Gastrocnemius medialis (tissue), 4 donors: ENCODE measurements at regions of chr9 and their contacts with region 1.

Region 1: DNA sequence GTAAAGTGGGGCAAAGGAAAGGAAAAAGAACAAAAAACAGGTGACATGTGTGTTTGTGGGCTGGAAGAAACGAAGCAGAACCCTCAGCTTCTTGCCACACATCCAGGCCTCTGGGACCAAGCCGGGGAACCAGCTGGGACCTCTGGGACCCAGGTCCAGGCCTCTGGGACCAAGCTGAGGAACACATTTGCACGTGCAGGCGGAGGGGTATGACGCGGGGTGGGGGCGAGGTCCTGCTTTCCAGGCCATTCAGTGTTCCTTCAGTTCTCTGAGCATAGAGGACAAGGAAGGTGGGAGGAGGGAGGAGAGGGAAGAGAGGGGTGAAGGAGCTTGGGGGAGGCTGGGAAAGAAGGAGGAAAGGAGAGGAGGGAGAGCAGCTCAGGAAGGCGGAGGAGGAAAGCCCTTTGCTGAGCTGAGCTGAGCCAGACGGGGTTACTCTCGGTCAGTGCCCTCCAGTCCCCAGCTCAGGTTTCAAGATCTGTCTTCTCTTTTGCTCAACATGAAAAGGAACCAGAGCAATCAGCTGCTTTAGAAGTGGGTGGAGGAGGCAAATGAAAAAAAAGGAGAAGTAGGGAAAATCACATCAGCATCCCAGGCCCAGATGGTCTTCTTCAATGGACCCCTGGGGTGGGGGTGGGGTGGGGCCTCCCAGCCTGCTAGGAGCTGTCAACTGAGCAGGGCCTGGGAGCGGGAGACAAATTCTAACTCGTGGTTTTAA is 59.1 kb downstream of the ABCA1 start:
- DNase-seq: peak; percentile 78 to 90
- ATAC-seq: peak; percentile 88 to 89
- H3K4me3 ChIP-seq: peak overlapping the region in 1 of 4 donors; percentile 14
- H3K27ac ChIP-seq: peak overlapping the region; percentile 84 to 92 (median 90)
- H3K4me1 ChIP-seq: peaks cover 67 to 69% of the 10 kb centered on the region in 2 donors
- H3K27me3 ChIP-seq: no peaks in the 10 kb centered on the region
- CTCF ChIP-seq: no peak
- POLR2A ChIP-seq: no peak

Region 2: GRCh38 chr9:104826907-104827306 is 41.9 kb before region 1 on chr9:
- in situ Hi-C with region 1: no loop called
- intact Hi-C with region 1: loop called (anchors 5 kb)
- DNase-seq: peak in 1 of 2 donors; percentile 42
- ATAC-seq: peak in 1 of 2 donors; percentile 41
- H3K4me3 ChIP-seq: no peak overlapping the region
- H3K27ac ChIP-seq: peak overlapping the region; percentile 61 to 81 (median 74)
- H3K4me1 ChIP-seq: peaks cover 12 to 27% of the 10 kb centered on the region in 2 donors
- H3K27me3 ChIP-seq: no peaks in the 10 kb centered on the region
- CTCF ChIP-seq: no peak
- POLR2A ChIP-seq: no peak

Region 3: DNA sequence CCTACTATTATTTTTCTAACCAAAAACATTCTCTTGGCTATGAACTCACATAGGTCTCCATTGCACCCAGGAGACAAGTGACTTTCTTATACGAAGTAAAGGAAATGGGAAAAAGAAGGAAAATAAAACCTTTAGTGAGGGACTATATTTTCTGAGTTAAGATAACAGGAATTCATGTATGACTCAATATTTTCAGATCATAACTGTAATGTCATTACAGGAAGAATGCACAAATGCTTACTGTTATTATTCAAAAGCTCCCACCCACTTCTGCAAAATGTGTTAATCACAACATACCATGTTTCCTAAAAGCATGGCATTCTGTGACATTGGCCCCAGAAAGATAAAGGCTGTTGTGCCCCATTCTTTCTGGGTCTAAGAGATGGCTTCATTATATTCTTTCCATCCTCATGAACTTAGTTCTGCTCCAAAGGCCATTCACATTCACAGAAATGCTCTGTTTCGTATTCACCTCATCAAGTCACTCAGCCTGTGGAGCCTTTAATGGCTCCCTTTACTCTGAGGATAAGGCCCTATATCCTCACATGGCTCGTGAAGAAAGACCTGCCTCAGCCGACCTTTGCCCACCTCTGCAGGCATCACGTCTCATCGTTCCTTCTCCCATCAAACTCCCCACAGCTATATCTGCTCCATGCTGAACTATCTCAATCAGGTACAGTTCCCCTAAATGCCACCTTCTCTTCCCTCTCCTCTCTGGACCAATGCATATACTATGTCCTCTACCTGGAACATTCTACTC is 17.9 kb before region 1 on chr9:
- in situ Hi-C with region 1: no loop called
- intact Hi-C with region 1: no loop called
- DNase-seq: no peak
- ATAC-seq: no peak
- H3K4me3 ChIP-seq: no peak overlapping the region
- H3K27ac ChIP-seq: peak overlapping the region in 3 of 4 donors; percentile 1 to 35 (median 32)
- H3K4me1 ChIP-seq: peaks cover 22 to 29% of the 10 kb centered on the region in 2 donors
- H3K27me3 ChIP-seq: no peaks in the 10 kb centered on the region
- CTCF ChIP-seq: no peak
- POLR2A ChIP-seq: no peak

Region 4: GRCh38 chr9:104927912-104928740 is 59.3 kb after region 1 on chr9 and contains the start of gene ABCA1:
- in situ Hi-C with region 1: no loop called
- intact Hi-C with region 1: loop called (anchors 2 kb)
- DNase-seq: peak; percentile 94 to 96
- ATAC-seq: peak; percentile 85
- H3K4me3 ChIP-seq: peak within 1 kb of the TSS; percentile 68 to 94 (median 88)
- H3K27ac ChIP-seq: peak within 1 kb of the TSS; percentile 89 to 98 (median 96)
- H3K4me1 ChIP-seq: peaks cover 30 to 31% of the 10 kb centered on the region in 2 donors
- H3K27me3 ChIP-seq: no peaks in the 10 kb centered on the region
- CTCF ChIP-seq: no peak
- POLR2A ChIP-seq: peak; percentile 51 to 96
- total RNA-seq, gene ABCA1: 4.9 to 23.8 (median 21.5) TPM

Region 5: DNA sequence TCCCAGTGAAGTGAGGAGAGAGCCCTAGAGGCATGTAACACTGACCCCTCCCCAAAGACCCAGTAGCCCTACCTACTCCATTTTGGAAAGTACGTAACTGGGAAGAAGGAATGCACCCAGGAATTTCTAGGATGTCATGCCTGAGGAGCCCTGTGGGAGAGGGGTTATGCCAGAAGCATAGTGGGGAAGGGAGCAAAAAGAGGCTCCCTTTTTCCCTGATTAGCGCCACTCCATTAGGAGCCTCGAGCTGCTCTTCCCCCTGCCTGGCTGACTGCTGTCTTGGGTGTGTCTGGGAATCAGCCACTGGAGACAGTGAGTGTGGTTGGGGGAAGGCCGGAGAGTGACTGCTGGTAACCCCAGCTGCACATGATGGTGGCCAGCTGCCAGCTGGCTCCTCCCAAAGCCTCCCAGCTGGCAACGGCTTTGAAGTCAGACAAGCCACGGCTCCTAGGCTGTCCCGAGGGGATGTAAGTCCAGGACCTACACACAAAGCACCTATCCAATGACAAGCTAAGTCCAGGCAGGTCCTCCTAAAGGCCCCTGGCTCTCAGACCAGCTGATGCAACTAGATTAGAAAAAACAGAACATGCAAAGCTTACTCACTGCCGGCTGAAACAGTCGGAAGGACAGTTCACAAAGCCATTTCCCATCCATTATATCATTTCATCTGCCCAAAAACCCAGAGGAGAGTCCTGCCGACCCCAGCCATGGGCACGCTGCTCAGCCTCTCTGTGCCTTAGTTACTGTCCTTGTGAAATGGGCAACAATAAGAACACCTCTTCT is 195.7 kb after region 1 on chr9:
- in situ Hi-C with region 1: loop called in 1 of 4 experiments (anchors 10 kb)
- intact Hi-C with region 1: loop called (anchors 2 kb)
- DNase-seq: peak; percentile 94 to 98
- ATAC-seq: peak; percentile 95
- H3K4me3 ChIP-seq: peak overlapping the region in 3 of 4 donors; percentile 17 to 33 (median 17)
- H3K27ac ChIP-seq: peak overlapping the region; percentile 84 to 92 (median 87)
- H3K4me1 ChIP-seq: peaks cover 21 to 24% of the 10 kb centered on the region in 2 donors
- H3K27me3 ChIP-seq: no peaks in the 10 kb centered on the region
- CTCF ChIP-seq: peak in 2 of 5 experiments; percentile 14 to 22
- POLR2A ChIP-seq: peak; percentile 47 to 74

Region 6: DNA sequence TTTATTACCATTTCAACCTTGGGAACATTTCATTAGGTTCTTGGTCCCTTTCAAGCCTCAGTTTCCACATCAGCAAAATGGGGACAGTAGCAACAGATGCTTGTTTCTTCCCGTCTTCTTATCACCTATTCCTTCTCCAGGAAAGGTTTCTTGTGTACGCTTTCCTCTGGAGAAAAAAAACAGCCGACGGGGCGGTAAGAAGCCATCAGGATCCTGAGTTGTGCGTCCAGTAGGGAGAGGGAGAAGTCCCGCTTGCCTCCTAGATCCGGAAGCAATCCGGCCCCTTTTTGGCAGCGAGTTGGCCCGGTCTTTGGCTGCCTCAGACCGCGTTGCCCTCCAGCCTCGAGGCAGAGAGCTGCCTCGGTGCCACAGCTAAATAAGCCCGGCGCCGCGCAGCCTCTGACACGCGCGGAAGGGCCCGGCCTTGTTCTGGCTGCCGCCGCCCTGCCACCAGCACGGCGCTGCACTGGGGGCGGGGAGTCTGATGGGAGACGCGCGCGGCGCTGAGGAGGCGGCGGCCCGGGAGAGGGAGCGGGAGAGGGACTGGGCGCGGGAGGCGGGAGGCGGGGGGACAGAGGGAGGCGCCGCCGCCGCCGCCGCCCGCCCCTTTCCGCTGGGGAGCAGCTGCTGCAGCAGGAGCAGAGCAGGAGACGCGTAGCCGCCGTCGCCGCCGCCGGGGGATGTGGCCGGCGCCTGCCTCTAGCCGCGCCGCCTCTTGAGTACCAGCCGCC is 375.3 kb after region 1 on chr9 and contains the start of gene SLC44A1:
- in situ Hi-C with region 1: no loop called
- intact Hi-C with region 1: loop called (anchors 5 kb)
- DNase-seq: peak; percentile 91 to 95
- ATAC-seq: peak; percentile 89 to 90
- H3K4me3 ChIP-seq: peak within 1 kb of the TSS; percentile 76 to 96 (median 84)
- H3K27ac ChIP-seq: peak within 1 kb of the TSS; percentile 71 to 82 (median 74)
- H3K4me1 ChIP-seq: peaks cover 10 to 16% of the 10 kb centered on the region in 2 donors
- H3K27me3 ChIP-seq: no peaks in the 10 kb centered on the region
- CTCF ChIP-seq: peak in 1 of 5 experiments; percentile 9
- POLR2A ChIP-seq: peak; percentile 85 to 88
- total RNA-seq, gene SLC44A1: 5.4 to 15.9 (median 11.3) TPM